ENCODE measurements at regions of chr9 and their contacts with region 1.

Region 1: DNA sequence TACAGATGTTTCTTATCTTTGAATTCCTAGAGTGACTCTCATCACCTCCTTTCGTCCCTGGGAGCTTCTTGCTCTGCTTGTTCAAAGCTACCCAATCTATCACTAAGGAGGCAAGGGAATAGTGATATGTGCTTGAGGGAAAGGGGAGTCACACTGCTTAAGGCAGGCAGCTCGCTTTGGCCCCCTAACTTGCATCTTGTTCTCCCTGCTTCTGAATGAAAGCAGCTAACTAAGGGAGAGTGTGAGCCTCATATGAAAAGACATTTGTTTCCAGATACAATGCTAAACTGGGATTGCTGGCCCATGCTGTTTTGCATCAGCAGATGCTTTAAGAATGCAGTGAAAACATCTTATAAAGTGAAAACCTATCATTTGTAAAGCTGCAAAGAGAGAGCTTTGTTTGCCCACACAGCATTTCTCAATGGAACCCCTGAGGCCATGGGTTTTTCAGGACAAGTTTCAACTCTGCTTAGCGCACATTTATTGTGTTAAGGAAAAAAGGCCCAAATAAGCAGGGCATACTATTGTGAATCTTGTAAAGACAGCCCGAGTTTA is 367.9 kb upstream of the ADAMTSL1 start:
- DNase-seq: no peak
- H3K4me3 ChIP-seq: no peak overlapping the region
- H3K27ac ChIP-seq: no peak overlapping the region
- H3K4me1 ChIP-seq: no peaks in the 10 kb centered on the region
- H3K27me3 ChIP-seq: peaks cover 4% of the 10 kb centered on the region; the same call in 1 of the 2 replicates

Region 2: GRCh38 chr9:18043978-18044377 is 62.1 kb before region 1 on chr9:
- in situ Hi-C with region 1: loop called (anchors 10 kb)
- DNase-seq: no peak
- H3K4me3 ChIP-seq: no peak overlapping the region
- H3K27ac ChIP-seq: no peak overlapping the region
- H3K4me1 ChIP-seq: no peaks in the 10 kb centered on the region
- H3K27me3 ChIP-seq: no peaks in the 10 kb centered on the region